Gastrocnemius medialis (tissue), 4 donors: ENCODE measurements at regions of chr12 and their contacts with region 1.

Region 1: GRCh38 chr12:115243933-115244807 is 560.2 kb upstream of the TBX3 start:
- DNase-seq: no peak
- ATAC-seq: no peak
- H3K4me3 ChIP-seq: no peak overlapping the region
- H3K27ac ChIP-seq: no peak overlapping the region
- H3K4me1 ChIP-seq: no peaks in the 10 kb centered on the region
- H3K27me3 ChIP-seq: no peaks in the 10 kb centered on the region
- CTCF ChIP-seq: no peak
- POLR2A ChIP-seq: no peak

Region 2: DNA sequence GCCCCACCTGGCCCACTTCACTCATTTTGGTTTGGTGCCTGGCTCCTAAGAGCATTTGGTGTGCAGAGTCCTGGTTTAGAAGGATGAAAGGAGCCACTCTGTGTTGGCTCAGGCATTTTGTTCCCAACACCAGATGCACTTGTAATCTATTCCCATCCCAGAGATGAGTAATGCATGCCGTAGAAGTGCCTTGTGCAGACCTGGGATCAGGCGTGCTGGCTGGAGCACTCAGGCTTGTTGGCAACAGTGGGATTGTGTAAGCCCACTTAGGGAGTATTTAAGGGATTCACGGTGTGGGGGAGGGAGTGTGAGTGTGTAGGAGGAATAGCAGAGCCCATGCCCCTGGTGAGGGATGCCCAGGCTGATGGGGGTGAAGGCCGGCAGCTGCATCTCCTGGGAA is 58.7 kb before region 1 on chr12:
- in situ Hi-C with region 1: no loop called
- intact Hi-C with region 1: loop called (anchors 2 kb)
- DNase-seq: no peak
- ATAC-seq: no peak
- H3K4me3 ChIP-seq: no peak overlapping the region
- H3K27ac ChIP-seq: no peak overlapping the region
- H3K4me1 ChIP-seq: no peaks in the 10 kb centered on the region
- H3K27me3 ChIP-seq: no peaks in the 10 kb centered on the region
- CTCF ChIP-seq: no peak
- POLR2A ChIP-seq: no peak

Region 3: GRCh38 chr12:116123451-116124258 is 879.5 kb after region 1 on chr12:
- in situ Hi-C with region 1: no loop called
- intact Hi-C with region 1: no loop called
- DNase-seq: peak; percentile 67 to 75
- ATAC-seq: peak; percentile 84 to 87
- H3K4me3 ChIP-seq: peak overlapping the region in 3 of 4 donors; percentile 24 to 36 (median 31)
- H3K27ac ChIP-seq: peak overlapping the region; percentile 1 to 77 (median 73)
- H3K4me1 ChIP-seq: peaks cover 89 to 93% of the 10 kb centered on the region in 2 donors
- H3K27me3 ChIP-seq: no peaks in the 10 kb centered on the region
- CTCF ChIP-seq: no peak
- POLR2A ChIP-seq: no peak